ENCODE measurements at regions of chr3 and their contacts with region 1.

Region 1: GRCh38 chr3:52685709-52686691 is at the starts of genes GNL3 and PBRM1:
- DNase-seq: peak; percentile 88 to 93
- ATAC-seq: peak; percentile 96 to 98
- H3K4me3 ChIP-seq: peak within 1 kb of the TSS; percentile 85 to 94 (median 86)
- H3K27ac ChIP-seq: peak within 1 kb of the TSS; percentile 84 to 94 (median 92)
- H3K4me1 ChIP-seq: peaks cover 31 to 42% of the 10 kb centered on the region in 2 donors
- H3K27me3 ChIP-seq: no peaks in the 10 kb centered on the region
- CTCF ChIP-seq: peak in 1 of 5 experiments; percentile 20
- POLR2A ChIP-seq: peak; percentile 89 to 91
- total RNA-seq, gene GNL3: 67.6 to 108 (median 94.2) TPM
- total RNA-seq, gene PBRM1: 22.9 to 45.2 (median 27.5) TPM

Region 2: DNA sequence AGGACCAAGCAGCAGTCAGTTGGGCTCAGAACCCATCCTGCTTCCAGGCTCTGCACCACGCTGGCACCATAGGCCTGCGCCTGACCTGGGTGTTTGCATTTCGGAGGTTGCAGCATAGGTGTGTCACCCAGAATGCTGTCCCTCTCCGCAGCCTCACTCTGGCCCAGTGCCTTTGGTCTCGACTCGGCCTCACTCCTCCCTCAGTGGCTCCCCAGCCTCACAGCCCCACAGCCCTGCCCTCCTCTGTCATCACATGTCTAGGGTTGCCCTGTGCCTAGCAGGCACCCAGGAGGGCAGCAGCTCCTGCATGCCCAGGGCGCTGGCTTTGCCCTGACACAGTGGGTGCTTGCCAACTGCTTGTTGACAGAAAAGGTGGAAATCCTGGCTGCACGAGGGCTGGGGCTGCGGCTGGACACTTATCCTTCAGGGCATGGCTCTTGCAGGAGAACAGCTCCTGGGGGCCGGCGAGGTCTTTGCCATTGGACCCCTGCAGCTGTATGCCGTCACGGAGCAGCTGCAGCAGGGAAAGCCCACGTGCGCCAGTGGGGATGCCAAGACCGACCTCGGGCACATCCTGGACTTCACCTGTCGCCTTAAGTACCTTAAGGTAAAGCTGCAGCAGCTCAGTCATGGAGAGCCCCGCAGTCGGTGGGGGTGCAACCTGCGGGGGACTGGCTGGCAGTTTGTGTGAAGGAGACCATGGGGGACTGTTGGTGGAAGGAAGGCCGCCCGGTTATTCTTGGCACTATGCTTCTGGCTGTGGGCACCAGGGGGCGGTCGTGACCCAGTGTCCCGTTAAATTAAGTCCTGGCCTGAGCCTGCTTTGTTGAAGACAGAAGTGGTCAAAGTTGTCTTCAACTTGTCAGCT is 214.4 kb before region 1 on chr3:
- in situ Hi-C with region 1: no loop called
- intact Hi-C with region 1: loop called (anchors 5 kb)
- DNase-seq: peak; percentile 62 to 91
- ATAC-seq: peak; percentile 49 to 78
- H3K4me3 ChIP-seq: no peak overlapping the region
- H3K27ac ChIP-seq: peak overlapping the region; percentile 69 to 85 (median 78)
- H3K4me1 ChIP-seq: peaks cover 33 to 52% of the 10 kb centered on the region in 2 donors
- H3K27me3 ChIP-seq: no peaks in the 10 kb centered on the region
- CTCF ChIP-seq: peak; percentile 77 to 88 (median 83)
- POLR2A ChIP-seq: peak in 1 of 2 donors; percentile 26

Region 3: DNA sequence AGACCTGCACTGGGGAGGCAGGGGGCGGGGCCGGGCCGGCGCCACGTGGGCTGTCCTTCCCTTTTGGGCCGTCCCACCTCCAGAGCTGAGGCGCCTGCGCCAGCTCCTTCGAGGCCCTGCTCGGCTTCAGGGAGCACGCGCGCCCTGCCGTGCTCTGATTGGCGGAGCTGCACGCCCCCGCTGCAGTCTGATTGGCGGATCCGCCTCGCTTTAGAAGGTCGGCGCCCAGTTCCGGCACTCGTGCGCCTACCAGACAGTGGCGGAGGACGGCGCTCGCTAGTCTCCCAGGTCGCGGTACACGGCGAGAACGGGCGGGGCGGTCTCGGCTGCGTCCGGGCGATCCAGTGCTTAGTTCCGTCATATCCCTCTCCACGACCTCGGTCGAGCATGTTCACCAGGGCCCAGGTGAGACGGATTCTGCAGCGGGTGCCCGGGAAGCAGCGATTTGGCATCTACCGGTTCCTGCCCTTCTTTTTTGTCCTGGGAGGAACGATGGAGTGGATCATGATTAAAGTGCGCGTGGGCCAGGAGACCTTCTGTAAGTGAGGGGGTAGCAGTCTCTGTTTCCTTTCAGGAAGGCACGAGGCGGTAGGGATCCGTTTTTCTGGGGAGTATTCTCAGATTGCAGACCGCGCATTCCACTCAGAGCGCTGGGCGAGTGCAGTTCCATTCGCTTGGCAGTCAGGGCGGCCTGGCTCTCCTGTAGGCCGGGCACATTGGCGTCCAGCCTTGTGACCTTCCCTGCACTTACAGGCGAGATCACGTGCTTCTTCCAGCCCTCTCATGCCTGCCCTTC is 149.4 kb before region 1 on chr3 and contains the start of gene UQCC5:
- in situ Hi-C with region 1: no loop called
- intact Hi-C with region 1: loop called (anchors 2 kb)
- DNase-seq: peak; percentile 97 to 98
- ATAC-seq: peak; percentile 80 to 85
- H3K4me3 ChIP-seq: peak within 1 kb of the TSS; percentile 63 to 91 (median 77)
- H3K27ac ChIP-seq: peak within 1 kb of the TSS; percentile 88 to 99 (median 94)
- H3K4me1 ChIP-seq: peaks cover 57 to 58% of the 10 kb centered on the region in 2 donors
- H3K27me3 ChIP-seq: no peaks in the 10 kb centered on the region
- CTCF ChIP-seq: peak in 1 of 5 experiments; percentile 22
- POLR2A ChIP-seq: peak; percentile 100
- total RNA-seq, gene UQCC5: 0.31 to 26.1 (median 0.87) TPM

Region 4: DNA sequence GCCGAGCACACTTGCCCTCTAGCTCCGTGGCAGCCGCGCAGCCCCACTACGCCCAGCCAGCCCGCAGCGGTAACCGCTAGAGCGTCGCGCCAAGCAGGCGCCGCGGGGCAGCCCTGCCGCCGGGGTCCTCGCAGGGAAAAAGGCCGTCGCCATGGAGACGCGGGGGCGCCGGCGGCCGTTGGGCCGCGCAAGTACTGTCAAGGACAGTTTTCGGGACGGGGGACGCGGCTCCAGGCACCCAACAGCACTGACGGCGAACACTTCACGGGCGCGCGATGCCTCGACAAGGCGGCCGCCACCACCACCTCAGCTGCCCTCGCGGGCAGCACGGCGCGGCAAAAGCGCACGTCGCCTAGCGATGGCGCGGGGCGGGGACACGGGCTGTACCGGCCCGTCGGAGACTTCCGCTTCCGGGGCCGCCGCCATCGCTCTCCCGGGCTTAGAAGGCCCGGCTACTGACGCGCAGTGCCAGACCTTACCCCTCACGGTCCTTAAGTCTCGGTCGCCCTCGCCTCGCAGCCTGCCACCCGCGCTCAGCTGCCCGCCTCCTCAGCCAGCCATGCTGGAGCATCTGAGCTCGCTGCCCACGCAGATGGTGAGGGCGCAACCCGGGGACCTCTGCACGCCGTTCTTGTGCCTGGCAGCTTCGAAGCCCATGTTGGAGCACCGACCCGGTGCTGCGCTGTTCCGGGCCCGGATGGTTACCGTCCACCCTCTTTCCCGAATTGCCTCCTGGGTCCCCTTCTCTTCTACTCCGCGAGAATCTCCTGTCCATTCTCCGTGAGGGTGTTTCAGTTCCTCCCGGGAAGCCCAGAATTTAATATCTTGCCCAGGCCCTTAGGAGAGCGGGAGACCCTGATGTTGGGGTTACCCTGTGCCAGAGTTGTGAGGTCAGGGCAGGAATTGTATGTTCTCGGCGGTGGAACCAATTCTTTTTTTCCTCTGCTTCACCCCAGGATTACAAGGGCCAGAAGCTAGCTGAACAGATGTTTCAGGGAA is 20.0 kb after region 1 on chr3 and contains the starts of genes GLT8D1 and SPCS1:
- in situ Hi-C with region 1: no loop called
- intact Hi-C with region 1: loop called (anchors 1 kb)
- DNase-seq: peak; percentile 71 to 77
- ATAC-seq: peak; percentile 93 to 94
- H3K4me3 ChIP-seq: peak within 1 kb of the TSS; percentile 79 to 97 (median 94)
- H3K27ac ChIP-seq: peak within 1 kb of the TSS; percentile 80 to 93 (median 85)
- H3K4me1 ChIP-seq: peaks cover 33 to 34% of the 10 kb centered on the region in 2 donors
- H3K27me3 ChIP-seq: no peaks in the 10 kb centered on the region
- CTCF ChIP-seq: no peak
- POLR2A ChIP-seq: peak; percentile 50 to 74
- total RNA-seq, gene GLT8D1: 15.6 to 39.6 (median 27.5) TPM
- total RNA-seq, gene SPCS1: 152 to 188 (median 162) TPM

Region 5: GRCh38 chr3:52831500-52832301 is 145.7 kb after region 1 on chr3:
- in situ Hi-C with region 1: no loop called
- intact Hi-C with region 1: loop called (anchors 5 kb)
- DNase-seq: peak; percentile 90 to 95
- ATAC-seq: peak; percentile 51 to 53
- H3K4me3 ChIP-seq: peak overlapping the region in 3 of 4 donors; percentile 3 to 36 (median 15)
- H3K27ac ChIP-seq: peak overlapping the region; percentile 96 to 98 (median 97)
- H3K4me1 ChIP-seq: peaks cover 60 to 66% of the 10 kb centered on the region in 2 donors
- H3K27me3 ChIP-seq: no peaks in the 10 kb centered on the region
- CTCF ChIP-seq: no peak
- POLR2A ChIP-seq: peak; percentile 54 to 66

Region 6: DNA sequence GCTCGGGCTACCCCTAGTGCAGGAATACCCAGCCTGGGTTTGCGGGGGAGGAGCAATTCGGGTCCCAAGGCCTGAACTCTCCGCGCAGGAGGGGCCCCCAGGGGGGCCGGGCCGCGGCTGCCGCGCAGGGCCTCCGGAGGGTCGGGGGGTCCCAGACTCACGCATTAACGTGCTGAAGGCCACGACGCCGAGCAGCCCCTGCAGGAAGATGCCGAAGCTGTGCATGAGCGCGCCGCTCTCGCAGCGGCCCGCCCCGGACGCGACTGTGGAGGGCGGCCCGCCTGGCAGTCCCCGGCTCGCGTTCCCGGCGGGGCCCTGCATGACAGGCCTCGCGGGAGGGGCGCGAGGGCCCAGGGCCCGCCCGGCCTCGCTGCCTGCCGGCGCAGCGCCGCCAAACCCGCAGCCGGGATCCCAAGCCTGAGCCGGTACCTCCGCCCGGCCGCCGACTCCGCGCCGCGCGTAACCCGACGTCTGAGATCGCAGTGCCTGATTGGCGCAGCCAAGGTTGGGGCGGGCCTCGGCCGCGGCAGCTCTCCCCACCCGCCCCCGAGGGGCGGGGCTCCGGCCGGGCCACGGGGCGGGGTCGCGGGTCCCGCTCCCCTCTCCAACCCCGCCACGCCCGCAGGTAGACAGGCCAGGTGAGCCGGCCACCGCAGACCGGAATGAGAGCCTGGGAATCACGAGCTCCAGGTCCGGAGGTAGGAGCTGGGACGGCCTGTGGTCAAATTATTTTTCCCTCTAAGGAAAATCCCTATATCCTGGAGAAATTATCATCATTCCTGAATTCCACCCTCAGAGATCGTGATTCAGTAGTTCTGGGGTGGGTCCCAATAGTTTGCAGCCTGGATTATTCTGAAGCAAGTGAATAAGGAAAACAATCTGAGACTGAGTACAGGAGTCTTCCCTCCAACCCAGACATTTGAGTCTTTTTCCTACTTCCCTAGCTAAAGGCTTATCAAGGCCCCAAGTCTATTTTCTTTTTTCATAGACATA is 211.4 kb after region 1 on chr3 and contains the start of gene STIMATE:
- in situ Hi-C with region 1: no loop called
- intact Hi-C with region 1: loop called (anchors 5 kb)
- DNase-seq: peak; percentile 77 to 85
- ATAC-seq: peak; percentile 84
- H3K4me3 ChIP-seq: peak within 1 kb of the TSS; percentile 71 to 91 (median 80)
- H3K27ac ChIP-seq: peak within 1 kb of the TSS; percentile 77 to 85 (median 82)
- H3K4me1 ChIP-seq: peaks cover 46 to 49% of the 10 kb centered on the region in 2 donors
- H3K27me3 ChIP-seq: no peaks in the 10 kb centered on the region
- CTCF ChIP-seq: peak in 2 of 5 experiments; percentile 8 to 13
- POLR2A ChIP-seq: peak; percentile 67 to 80
- total RNA-seq, gene STIMATE: 20.6 to 64.6 (median 27.8) TPM

Region 7: DNA sequence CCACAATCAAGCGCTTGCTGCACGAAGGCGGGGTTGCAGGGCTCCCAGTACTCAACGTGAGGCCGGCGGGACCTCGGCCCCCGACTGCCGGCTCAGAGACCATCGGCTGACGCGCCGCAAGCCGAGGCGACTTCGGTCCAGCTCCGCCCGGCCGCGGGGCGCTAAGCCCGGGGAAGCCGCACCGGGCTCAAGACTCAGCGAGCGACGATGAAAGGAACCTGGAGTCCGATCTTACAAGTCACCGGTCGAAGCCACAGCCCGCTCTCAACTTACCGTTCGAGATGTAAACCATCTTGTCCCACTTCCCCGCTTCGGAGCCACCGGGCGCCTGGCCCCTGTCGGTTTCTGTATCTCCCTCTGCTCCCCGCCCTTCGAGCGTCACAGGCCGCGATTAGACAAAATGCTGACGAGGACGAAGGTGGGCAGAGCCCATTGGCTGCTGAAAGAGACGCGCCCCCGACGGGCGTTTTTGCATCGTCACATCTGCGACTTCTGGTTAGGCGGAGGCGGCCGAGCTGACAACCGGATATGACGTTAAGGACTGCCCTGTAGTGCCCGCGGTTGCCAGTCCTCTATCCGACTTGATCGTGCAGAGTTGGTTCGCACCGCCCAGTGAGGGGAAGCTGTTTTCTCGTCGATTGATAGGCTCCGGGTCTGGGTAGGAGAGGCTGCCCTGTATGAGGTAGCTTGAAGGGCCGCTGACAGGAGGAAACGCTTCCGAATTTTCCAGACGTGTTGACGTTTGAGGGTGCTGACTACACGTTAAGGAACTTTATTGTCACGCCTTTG is 1205.7 kb after region 1 on chr3 and contains the start of gene SELENOK:
- in situ Hi-C with region 1: no loop called
- intact Hi-C with region 1: loop called (anchors 10 kb)
- DNase-seq: peak; percentile 98 to 99
- ATAC-seq: peak; percentile 98 to 99
- H3K4me3 ChIP-seq: peak within 1 kb of the TSS; percentile 66 to 98 (median 96)
- H3K27ac ChIP-seq: peak within 1 kb of the TSS; percentile 92 to 97 (median 95)
- H3K4me1 ChIP-seq: peaks cover 14 to 22% of the 10 kb centered on the region in 2 donors
- H3K27me3 ChIP-seq: no peaks in the 10 kb centered on the region
- CTCF ChIP-seq: no peak
- POLR2A ChIP-seq: peak; percentile 95 to 96
- total RNA-seq, gene SELENOK: 73.1 to 95.4 (median 80.8) TPM